Stomach (tissue), 19 donors: ENCODE measurements at regions of chr19 and their contacts with region 1.

Region 1: DNA sequence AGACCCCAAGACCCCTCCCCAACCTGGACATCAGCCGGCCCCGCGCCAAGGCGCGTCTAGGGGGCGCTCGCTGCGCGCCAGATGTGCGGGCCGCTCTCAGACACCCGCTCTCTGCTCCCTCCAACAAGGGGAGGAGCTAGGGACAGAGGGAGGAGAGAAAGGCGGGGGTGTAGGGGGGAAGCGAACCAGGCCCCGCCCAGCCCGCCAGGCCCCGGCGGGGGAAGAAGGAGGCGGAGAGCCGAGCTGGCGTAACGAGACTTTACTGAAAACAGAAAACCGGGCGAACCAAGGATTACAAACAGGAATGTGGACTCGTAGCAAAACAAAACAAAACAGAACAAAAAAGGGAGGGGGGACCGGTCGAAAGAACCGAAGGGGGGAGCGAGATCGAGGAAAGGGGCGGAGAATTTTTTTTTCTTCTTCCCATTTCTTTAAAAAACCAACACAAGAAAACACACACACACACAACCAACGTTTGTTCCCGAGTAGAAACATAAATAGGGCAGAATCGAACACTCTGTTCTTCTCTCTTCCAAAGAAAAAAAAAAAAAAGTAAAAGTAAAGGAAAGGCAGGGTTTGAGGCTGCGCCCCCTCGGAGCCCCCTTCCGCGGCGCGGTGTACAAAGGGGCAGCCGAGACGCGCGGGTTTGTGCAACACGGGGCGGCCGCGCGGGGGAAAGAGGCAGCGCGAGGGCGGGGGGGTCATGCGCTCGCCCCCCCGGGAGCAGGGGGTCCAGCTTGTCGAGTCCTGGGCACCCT is 1.7 kb downstream of the JUND start:
- DNase-seq: peak; percentile 92 to 98
- H3K4me3 ChIP-seq: peak overlapping the region; percentile 68 to 98 (median 90)
- H3K27ac ChIP-seq: peak overlapping the region; percentile 98 to 100 (median 100)
- H3K4me1 ChIP-seq: peaks cover 55 to 66% (median 63%) of the 10 kb centered on the region in 4 donors
- H3K27me3 ChIP-seq: no peaks in the 10 kb centered on the region
- CTCF ChIP-seq: peak in 5 of 7 experiments; percentile 47 to 85 (median 80)
- EP300 ChIP-seq: peak; percentile 20
- POLR2A ChIP-seq: peak in 2 of 4 donors; percentile 87 to 89

Region 2: GRCh38 chr19:18328340-18329034 is 48.8 kb after region 1 on chr19:
- intact Hi-C with region 1: loop called (anchors 5 kb)
- DNase-seq: peak; percentile 94 to 97
- H3K4me3 ChIP-seq: peak overlapping the region; percentile 15 to 32 (median 25)
- H3K27ac ChIP-seq: peak overlapping the region; percentile 66 to 79 (median 77)
- H3K4me1 ChIP-seq: peaks cover 18 to 27% (median 19%) of the 10 kb centered on the region in 4 donors
- H3K27me3 ChIP-seq: no peaks in the 10 kb centered on the region
- CTCF ChIP-seq: peak in 6 of 7 experiments; percentile 85 to 100 (median 94)
- EP300 ChIP-seq: no peak
- POLR2A ChIP-seq: no peak

Region 3: DNA sequence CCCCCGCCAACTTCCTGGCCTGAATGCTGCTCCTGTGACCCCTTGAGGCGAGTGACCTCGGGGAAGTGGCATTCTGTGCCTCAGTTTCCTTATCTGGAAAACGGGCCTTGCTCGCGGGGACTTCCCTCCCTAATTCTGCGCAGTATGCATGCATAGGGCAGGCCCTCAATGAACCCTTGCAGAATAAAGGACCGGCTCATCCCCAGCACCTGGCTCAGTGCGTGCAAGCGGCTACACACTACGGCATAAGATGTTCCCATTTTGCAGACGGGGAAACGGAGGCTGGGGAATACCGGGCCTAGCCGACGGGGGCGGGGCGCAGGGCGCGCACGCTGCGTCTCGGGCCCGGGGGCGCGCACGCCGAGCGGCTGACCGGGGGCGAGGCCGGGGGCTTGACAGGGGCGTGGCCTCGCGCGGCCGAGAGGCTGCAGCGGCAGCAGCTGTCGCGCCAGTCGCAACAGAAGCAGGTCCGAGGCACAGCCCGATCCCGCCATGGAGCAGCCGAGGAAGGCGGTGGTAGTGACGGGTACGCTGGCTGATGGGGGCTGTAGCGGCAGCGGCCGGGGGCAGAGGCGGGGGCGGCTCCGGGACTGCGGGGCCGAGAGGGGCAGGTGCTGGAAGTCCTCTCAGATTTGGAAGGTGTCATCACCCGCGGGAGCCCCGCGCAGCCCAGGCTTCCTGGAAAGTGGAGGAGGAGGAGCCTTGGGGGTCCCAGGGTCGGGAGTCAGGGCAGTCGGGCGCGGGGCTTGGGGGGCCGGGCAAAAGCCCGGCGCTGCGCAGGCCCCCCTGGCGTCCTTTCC is 60.7 kb after region 1 on chr19 and contains the start of gene PGPEP1:
- intact Hi-C with region 1: no loop called
- DNase-seq: peak; percentile 80 to 91
- H3K4me3 ChIP-seq: peak within 1 kb of the TSS; percentile 75 to 98 (median 90)
- H3K27ac ChIP-seq: peak within 1 kb of the TSS; percentile 88 to 95 (median 91)
- H3K4me1 ChIP-seq: peaks cover 30 to 50% (median 46%) of the 10 kb centered on the region in 4 donors
- H3K27me3 ChIP-seq: no peaks in the 10 kb centered on the region
- CTCF ChIP-seq: no peak
- EP300 ChIP-seq: no peak
- POLR2A ChIP-seq: peak in 1 of 4 donors; percentile 10
- total RNA-seq, gene PGPEP1: 8.0 to 58.9 (median 22.9) TPM